Naive thymus-derived CD4-positive, alpha-beta T cell (primary cell): ENCODE measurements at regions of chr14 and their contacts with region 1.

Region 1: DNA sequence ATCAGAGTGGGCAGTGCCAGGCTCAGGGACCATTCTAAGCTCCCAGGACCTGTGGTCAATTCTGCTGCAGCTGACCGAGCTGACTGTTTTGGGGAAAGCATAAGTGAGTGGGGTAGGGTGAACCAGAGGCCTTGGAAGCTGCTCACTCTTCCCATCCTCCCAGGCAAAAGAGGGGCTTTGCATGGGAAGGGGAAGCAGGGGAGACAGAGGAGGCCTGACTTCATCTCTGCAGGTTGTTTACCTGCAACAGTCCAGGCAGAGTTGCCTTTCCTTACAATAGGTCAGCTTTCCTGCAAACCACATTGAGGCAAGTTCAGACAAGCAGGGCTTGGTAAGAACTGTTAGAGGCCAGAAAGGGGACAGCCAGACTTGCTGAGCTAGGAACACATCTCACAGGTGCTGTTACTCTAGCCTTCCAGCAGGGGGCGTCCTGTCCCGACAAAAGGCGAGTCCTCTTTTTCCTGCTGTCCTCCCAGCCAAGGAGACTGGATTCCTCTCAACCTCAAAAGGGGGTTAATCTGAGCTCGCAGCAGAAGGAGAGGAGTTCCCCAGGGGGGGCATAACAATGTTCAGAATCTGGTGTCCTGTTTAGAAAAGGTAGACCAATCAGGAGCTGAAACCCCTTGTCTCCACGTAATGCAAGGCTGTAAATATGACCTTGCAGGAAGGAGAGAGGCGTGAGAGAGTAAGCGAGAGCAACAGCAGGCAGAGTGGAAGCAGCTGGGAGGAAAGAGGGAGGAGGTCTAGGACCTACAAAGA is 4.3 kb upstream of the DHRS2 start:
- DNase-seq: peak; percentile 53 to 89 (median 76)
- ATAC-seq: peak; percentile 88
- H3K4me3 ChIP-seq: peak overlapping the region; percentile 16
- H3K4me3 Mint-ChIP-seq: peak overlapping the region; percentile 9 to 89 (median 77)
- H3K27ac ChIP-seq: peak overlapping the region; percentile 18
- H3K27ac Mint-ChIP-seq: peak overlapping the region in 8 of 9 donors; percentile 17 to 84 (median 60)
- H3K4me1 ChIP-seq: no peaks in the 10 kb centered on the region
- H3K4me1 Mint-ChIP-seq: peaks cover 5 to 18% (median 13%) of the 10 kb centered on the region in 7 donors
- H3K27me3 ChIP-seq: no peaks in the 10 kb centered on the region
- H3K27me3 Mint-ChIP-seq: peaks cover 0 to 2% (median 0%) of the 10 kb centered on the region in 5 donors

Region 2: GRCh38 chr14:23588884-23589598 is 42.8 kb before region 1 on chr14:
- CTCF ChIA-PET with region 1: interaction called, 21 read pairs
- POLR2A ChIA-PET with region 1: interaction called, 5 read pairs
- intact Hi-C with region 1: loop called in 1 of 2 experiments (anchors 1 kb)
- DNase-seq: peak; percentile 63 to 84 (median 79)
- ATAC-seq: peak; percentile 98
- H3K4me3 ChIP-seq: no peak overlapping the region
- H3K4me3 Mint-ChIP-seq: no peak overlapping the region
- H3K27ac ChIP-seq: no peak overlapping the region
- H3K27ac Mint-ChIP-seq: peak overlapping the region in 2 of 9 donors; percentile 21 to 65
- H3K4me1 ChIP-seq: no peaks in the 10 kb centered on the region
- H3K4me1 Mint-ChIP-seq: peaks cover 3 to 13% (median 9%) of the 10 kb centered on the region in 7 donors
- H3K27me3 ChIP-seq: no peaks in the 10 kb centered on the region
- H3K27me3 Mint-ChIP-seq: peaks cover 9 to 21% (median 14%) of the 10 kb centered on the region in 5 donors

Region 3: GRCh38 chr14:23610090-23610814 is 21.6 kb before region 1 on chr14:
- CTCF ChIA-PET with region 1: interaction called, 41 read pairs
- POLR2A ChIA-PET with region 1: interaction called, 5 read pairs
- intact Hi-C with region 1: no loop called
- DNase-seq: peak in 6 of 9 donors; percentile 11 to 53 (median 44)
- ATAC-seq: peak; percentile 78
- H3K4me3 ChIP-seq: peak overlapping the region; percentile 14
- H3K4me3 Mint-ChIP-seq: peak overlapping the region; percentile 65 to 92 (median 82)
- H3K27ac ChIP-seq: peak overlapping the region; percentile 57
- H3K27ac Mint-ChIP-seq: peak overlapping the region; percentile 85 to 98 (median 95)
- H3K4me1 ChIP-seq: peaks cover 20 to 31% of the 10 kb centered on the region in 2 donors
- H3K4me1 Mint-ChIP-seq: peaks cover 21 to 46% (median 41%) of the 10 kb centered on the region in 7 donors
- H3K27me3 ChIP-seq: no peaks in the 10 kb centered on the region
- H3K27me3 Mint-ChIP-seq: peaks cover 0 to 4% (median 0%) of the 10 kb centered on the region in 5 donors

Region 4: DNA sequence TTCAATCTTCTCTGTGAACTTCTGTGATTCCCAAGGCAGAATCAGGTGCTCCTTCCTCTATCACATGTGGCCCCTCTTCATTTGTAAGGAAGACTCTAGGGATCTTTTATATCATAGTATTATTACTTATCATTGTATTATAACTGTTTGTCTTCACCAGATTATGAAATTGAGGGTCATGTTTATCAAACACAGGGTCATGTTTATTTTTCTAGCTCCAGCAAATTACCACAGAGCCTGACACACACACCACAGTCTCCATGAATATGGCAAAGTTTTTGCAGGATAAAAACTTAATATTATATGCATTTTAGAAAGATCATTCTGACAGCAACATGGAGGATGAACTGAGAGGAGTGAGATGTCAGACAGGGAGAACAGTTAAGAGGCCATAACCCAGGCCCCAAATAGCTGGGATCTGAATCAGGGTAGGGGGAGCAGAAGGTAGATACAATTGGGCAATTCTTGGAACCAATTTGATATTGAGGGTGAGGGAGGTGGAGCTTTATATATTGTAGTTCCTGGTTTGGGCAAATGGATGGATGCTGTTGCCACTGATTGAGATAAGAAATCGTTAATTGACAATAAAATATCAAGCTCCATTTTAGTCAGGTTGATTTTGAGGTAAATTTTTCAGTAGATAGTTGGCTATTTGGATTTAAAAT is 135.0 kb after region 1 on chr14:
- CTCF ChIA-PET with region 1: no interaction called
- POLR2A ChIA-PET with region 1: no interaction called
- intact Hi-C with region 1: no loop called
- DNase-seq: no peak
- ATAC-seq: no peak
- H3K4me3 ChIP-seq: no peak overlapping the region
- H3K4me3 Mint-ChIP-seq: no peak overlapping the region
- H3K27ac ChIP-seq: no peak overlapping the region
- H3K27ac Mint-ChIP-seq: no peak overlapping the region
- H3K4me1 ChIP-seq: no peaks in the 10 kb centered on the region
- H3K4me1 Mint-ChIP-seq: no peaks in the 10 kb centered on the region
- H3K27me3 ChIP-seq: peaks cover 0 to 6% of the 10 kb centered on the region in 2 donors
- H3K27me3 Mint-ChIP-seq: peaks cover 7 to 35% (median 27%) of the 10 kb centered on the region in 5 donors

Region 5: DNA sequence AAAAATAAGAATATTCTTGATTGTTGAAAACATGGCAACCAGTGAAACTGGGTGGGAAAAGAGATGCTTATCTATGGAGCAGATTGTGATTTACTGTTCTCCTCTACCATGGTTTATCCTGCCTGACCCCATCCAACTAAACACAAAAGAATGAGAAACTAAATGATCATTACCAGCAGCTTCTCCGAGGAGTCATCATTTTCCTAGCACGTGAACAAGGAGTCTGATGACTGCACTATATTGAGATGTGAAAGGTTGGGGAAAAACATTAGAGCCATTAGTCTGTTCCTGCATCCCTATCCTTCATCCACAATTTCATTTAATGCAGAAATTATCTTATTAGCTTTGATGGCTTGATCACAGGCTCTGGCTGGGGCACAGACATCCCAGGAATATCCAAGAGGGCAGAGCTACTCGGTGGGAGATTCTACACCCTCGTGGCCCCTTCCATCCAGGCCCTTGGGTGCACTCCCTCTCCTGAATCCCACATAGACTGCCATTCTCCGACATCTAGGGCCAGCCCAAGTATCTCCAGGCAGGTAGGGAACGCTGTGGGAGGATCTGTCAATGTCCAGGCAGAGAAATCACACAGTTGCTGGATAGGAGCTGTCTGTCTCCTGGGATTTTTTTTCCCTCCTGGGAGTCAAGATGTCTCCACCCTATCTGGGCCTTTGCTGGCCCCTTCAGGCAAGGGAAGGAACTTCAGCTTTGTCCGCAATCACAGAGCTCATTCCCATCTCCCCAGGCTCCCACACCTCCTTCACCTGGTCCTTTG is 278.4 kb after region 1 on chr14:
- CTCF ChIA-PET with region 1: interaction called, 6 read pairs
- POLR2A ChIA-PET with region 1: no interaction called
- intact Hi-C with region 1: loop called in 1 of 2 experiments (anchors 1 kb)
- DNase-seq: peak in 2 of 9 donors; percentile 2 to 4
- ATAC-seq: peak; percentile 45
- H3K4me3 ChIP-seq: no peak overlapping the region
- H3K4me3 Mint-ChIP-seq: no peak overlapping the region
- H3K27ac ChIP-seq: no peak overlapping the region
- H3K27ac Mint-ChIP-seq: no peak overlapping the region
- H3K4me1 ChIP-seq: no peaks in the 10 kb centered on the region
- H3K4me1 Mint-ChIP-seq: peaks cover 0 to 1% (median 0%) of the 10 kb centered on the region in 7 donors
- H3K27me3 ChIP-seq: no peaks in the 10 kb centered on the region
- H3K27me3 Mint-ChIP-seq: peaks cover 8 to 39% (median 20%) of the 10 kb centered on the region in 5 donors

Region 6: DNA sequence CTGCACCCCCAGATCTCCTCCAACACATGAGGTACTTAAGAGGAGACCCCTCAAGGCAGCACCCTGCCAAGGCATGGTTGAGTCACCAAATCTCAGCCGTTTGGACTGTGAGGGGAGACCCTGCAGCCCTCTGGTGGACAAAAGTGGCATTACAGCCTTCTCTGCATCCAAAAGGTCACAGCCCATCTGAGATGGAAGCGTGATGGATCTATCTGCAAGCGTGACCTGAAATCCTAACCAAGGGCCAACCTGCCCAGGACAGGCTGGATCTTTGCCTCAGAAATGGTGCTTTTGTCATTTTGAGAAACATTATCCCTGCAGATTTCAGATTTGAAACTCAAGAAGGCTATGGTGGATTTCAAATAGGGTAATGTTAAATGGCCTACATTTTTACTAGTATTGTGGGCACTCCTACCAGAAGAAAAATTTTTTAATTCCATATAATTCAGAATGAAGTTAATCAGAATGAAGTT is 298.0 kb after region 1 on chr14:
- CTCF ChIA-PET with region 1: interaction called, 13 read pairs
- POLR2A ChIA-PET with region 1: no interaction called
- intact Hi-C with region 1: loop called (anchors 1 to 5 kb)
- DNase-seq: peak; percentile 54 to 81 (median 71)
- ATAC-seq: peak; percentile 92
- H3K4me3 ChIP-seq: no peak overlapping the region
- H3K4me3 Mint-ChIP-seq: no peak overlapping the region
- H3K27ac ChIP-seq: no peak overlapping the region
- H3K27ac Mint-ChIP-seq: no peak overlapping the region
- H3K4me1 ChIP-seq: no peaks in the 10 kb centered on the region
- H3K4me1 Mint-ChIP-seq: no peaks in the 10 kb centered on the region
- H3K27me3 ChIP-seq: no peaks in the 10 kb centered on the region
- H3K27me3 Mint-ChIP-seq: peaks cover 0 to 8% (median 0%) of the 10 kb centered on the region in 5 donors

Region 7: DNA sequence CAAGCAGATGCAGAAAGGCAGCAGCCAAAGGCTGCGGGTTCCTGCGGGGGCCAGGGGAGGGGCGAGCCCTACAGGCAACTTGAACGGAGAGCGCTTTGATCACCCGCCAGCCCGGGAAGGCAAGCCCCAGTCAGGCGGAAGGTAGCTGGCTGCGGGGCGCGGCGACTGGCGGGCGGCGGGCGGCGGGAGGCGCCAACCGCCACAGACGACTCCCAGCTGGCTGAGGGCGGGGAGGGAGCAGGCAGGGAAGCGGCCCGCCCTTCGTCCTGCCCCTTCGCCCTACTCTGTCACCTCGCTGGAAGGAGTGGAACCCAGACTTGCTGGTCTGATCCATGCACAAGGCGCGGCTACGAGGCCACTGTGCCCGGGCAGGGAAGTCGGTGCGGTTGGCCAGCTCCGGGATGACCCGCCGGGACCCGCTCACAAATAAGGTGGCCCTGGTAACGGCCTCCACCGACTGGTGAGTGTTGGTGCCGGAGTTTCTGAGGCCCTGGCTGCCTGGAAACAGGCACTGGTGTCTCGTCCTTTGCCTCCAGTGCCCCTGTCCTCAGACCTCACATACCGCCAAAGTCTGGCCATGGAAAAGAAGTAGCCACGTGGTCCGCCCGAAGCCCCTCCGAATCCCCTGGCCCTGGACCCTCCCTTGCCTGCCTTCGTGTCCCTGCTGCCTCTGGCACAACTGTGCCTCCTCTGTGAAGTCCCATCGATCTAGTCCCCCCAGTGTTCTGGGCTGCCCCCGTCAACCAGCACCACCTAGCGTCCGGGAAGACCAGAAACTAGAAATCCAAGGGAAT is 404.5 kb after region 1 on chr14:
- CTCF ChIA-PET with region 1: interaction called, 5 read pairs
- POLR2A ChIA-PET with region 1: no interaction called
- intact Hi-C with region 1: loop called in 1 of 2 experiments (anchors 1 kb)
- DNase-seq: peak; percentile 46 to 76 (median 63)
- ATAC-seq: peak; percentile 84
- H3K4me3 ChIP-seq: peak overlapping the region; percentile 80
- H3K4me3 Mint-ChIP-seq: peak overlapping the region; percentile 93 to 100 (median 96)
- H3K27ac ChIP-seq: peak overlapping the region; percentile 65
- H3K27ac Mint-ChIP-seq: peak overlapping the region; percentile 68 to 95 (median 88)
- H3K4me1 ChIP-seq: no peaks in the 10 kb centered on the region
- H3K4me1 Mint-ChIP-seq: peaks cover 6 to 16% (median 10%) of the 10 kb centered on the region in 7 donors
- H3K27me3 ChIP-seq: no peaks in the 10 kb centered on the region
- H3K27me3 Mint-ChIP-seq: peaks cover 0 to 3% (median 0%) of the 10 kb centered on the region in 5 donors